Activated CD4-positive, alpha-beta T cell treated with anti-CD3 and anti-CD28 coated beads, Interleukin-2, amount 10 ng/mL, durations not matched to agents 24 days and 14 days (primary cell): ENCODE measurements at regions of chr17 and their contacts with region 1.

Region 1: GRCh38 chr17:51153210-51154072 is at the start of gene NME1:
- DNase-seq: peak; percentile 100
- H3K4me3 Mint-ChIP-seq: no peak within 1 kb of the TSS
- H3K27ac Mint-ChIP-seq: no peak within 1 kb of the TSS
- H3K4me1 Mint-ChIP-seq: peaks cover 23% of the 10 kb centered on the region
- H3K27me3 Mint-ChIP-seq: no peaks in the 10 kb centered on the region
- total RNA-seq, gene NME1: 447 and 455 TPM in 2 replicates

Region 2: DNA sequence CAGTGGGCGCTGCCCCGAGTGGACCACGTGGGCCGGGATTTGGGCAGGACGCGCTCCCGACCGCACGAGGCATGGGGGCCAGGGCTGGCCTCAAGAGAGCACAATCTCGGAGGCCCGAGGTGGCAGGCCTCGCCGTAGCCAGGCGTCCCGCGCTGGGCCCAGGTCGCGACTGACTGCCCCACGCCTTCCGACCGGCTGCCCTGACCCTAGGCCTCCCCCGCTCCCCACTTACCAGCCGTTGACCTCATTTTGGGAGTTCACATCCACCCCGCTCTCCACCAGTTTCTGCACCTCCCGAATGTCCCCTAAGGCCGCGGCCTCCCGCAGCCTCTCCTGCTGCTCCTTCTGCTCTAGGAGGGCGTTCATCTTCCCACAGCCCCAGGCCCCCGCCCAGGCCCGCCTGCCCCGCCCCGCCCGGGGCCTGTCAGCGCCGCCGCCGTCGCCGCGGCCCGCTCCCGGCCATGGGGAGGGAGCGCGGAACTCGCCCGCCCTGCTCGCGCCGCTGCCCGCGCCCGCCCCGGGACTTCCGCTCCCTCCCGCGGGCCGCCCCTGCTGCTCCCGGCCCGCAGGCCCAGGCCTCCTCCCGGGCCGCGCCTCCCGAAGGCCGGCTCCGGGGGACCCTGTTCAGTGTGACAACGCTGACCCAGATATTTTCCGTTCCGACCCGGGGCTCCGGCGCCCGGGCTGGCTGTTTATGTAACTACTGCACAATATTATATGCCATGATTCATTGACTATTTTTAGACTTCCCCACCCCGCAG is 446.0 kb before region 1 on chr17 and contains the start of gene ANKRD40:
- intact Hi-C with region 1: loop called (anchors 5 kb)
- DNase-seq: peak; percentile 98
- H3K4me3 Mint-ChIP-seq: peak within 1 kb of the TSS; percentile 86
- H3K27ac Mint-ChIP-seq: peak within 1 kb of the TSS; percentile 98
- H3K4me1 Mint-ChIP-seq: peaks cover 33% of the 10 kb centered on the region
- H3K27me3 Mint-ChIP-seq: peaks cover 2% of the 10 kb centered on the region
- total RNA-seq, gene ANKRD40: 47.7 and 49.8 TPM in 2 replicates

Region 3: DNA sequence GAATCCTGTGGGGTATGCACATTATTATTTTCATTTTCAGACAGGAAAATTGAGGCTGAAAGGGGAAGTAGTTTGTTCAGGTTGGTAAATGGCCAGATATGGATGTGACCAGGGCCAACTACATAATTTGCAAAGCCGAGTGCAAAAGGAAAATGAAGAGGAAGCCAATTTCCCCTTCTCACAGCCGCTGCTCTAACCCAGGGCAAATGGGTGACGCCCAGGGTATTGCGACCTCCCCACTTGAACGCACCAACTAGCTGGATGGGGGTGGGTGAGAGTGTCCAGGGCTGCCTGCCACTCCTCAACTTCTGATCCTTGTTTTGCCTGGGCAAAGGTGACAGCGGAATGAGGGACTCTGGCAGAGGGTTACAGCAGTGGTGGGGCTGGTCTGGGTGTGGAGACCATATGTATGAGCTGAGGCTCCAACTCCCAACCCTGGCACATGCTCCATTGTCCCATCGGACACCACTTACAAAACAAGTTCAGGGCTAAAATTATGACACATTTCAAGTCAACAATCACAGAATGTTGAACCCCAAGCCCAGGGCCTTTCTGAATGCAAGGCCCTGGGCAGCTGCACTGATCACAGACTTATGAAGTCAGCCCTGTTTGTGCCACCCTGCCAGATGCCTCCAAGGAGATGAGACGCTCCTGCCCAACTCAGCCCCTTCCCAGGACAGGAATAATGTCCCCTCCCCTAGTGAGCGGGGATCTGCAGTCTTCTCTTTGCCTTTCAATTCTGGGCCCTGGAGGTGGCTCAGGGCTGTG is 387.8 kb before region 1 on chr17:
- intact Hi-C with region 1: no loop called
- DNase-seq: no peak
- H3K4me3 Mint-ChIP-seq: no peak overlapping the region
- H3K27ac Mint-ChIP-seq: no peak overlapping the region
- H3K4me1 Mint-ChIP-seq: no peaks in the 10 kb centered on the region
- H3K27me3 Mint-ChIP-seq: peaks cover 29% of the 10 kb centered on the region

Region 4: GRCh38 chr17:51000835-51001638 is 152.4 kb before region 1 on chr17:
- intact Hi-C with region 1: loop called (anchors 1 kb)
- DNase-seq: peak; percentile 83
- H3K4me3 Mint-ChIP-seq: no peak overlapping the region
- H3K27ac Mint-ChIP-seq: peak overlapping the region; percentile 4
- H3K4me1 Mint-ChIP-seq: peaks cover 3% of the 10 kb centered on the region
- H3K27me3 Mint-ChIP-seq: no peaks in the 10 kb centered on the region

Region 5: DNA sequence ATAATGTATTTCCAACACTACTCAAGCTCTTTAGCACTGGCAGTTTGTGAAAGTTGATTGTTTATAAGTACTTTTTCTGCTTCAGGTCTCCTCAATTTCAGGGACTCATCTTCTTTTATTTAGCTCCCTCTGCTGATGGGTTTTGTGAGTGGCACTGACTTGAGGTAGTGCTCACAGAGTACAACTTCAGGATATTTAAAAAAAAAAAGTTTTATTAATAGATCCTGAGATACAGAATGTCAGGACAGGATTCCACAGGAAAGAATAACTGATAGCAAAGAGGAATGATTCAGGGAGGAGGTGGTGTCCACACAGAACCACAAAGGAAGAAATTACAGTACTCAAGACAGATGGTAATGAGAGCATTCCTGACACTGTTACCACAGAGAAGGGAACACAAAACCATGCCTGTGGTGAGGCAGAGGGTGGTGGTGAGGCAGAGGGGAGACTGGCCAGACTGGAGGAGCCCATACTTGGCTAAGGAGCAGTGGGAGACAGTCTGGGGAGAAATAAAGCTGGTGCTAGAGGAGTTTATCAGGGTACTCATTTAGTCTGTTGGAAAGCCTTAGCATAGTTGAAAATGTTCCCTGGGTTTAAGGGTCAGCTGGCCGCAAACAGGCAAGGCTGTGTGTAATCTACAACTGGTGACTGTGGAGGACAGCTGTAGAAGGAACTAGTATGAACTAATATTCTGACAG is 96.5 kb before region 1 on chr17:
- intact Hi-C with region 1: loop called (anchors 1 kb)
- DNase-seq: peak; percentile 81
- H3K4me3 Mint-ChIP-seq: no peak overlapping the region
- H3K27ac Mint-ChIP-seq: no peak overlapping the region
- H3K4me1 Mint-ChIP-seq: peaks cover 3% of the 10 kb centered on the region
- H3K27me3 Mint-ChIP-seq: no peaks in the 10 kb centered on the region

Region 6: GRCh38 chr17:51097708-51098446 is 55.6 kb before region 1 on chr17:
- intact Hi-C with region 1: no loop called
- DNase-seq: no peak
- H3K4me3 Mint-ChIP-seq: no peak overlapping the region
- H3K27ac Mint-ChIP-seq: no peak overlapping the region
- H3K4me1 Mint-ChIP-seq: peaks cover 26% of the 10 kb centered on the region
- H3K27me3 Mint-ChIP-seq: no peaks in the 10 kb centered on the region

Region 7: GRCh38 chr17:51120739-51121617 is 32.5 kb before region 1 on chr17 and contains the start of gene SPAG9:
- intact Hi-C with region 1: loop called (anchors 1 kb)
- DNase-seq: peak; percentile 98
- H3K4me3 Mint-ChIP-seq: peak within 1 kb of the TSS; percentile 91
- H3K27ac Mint-ChIP-seq: peak within 1 kb of the TSS; percentile 98
- H3K4me1 Mint-ChIP-seq: peaks cover 43% of the 10 kb centered on the region
- H3K27me3 Mint-ChIP-seq: peaks cover 1% of the 10 kb centered on the region
- total RNA-seq, gene SPAG9: 47.5 and 47.7 TPM in 2 replicates

Region 8: DNA sequence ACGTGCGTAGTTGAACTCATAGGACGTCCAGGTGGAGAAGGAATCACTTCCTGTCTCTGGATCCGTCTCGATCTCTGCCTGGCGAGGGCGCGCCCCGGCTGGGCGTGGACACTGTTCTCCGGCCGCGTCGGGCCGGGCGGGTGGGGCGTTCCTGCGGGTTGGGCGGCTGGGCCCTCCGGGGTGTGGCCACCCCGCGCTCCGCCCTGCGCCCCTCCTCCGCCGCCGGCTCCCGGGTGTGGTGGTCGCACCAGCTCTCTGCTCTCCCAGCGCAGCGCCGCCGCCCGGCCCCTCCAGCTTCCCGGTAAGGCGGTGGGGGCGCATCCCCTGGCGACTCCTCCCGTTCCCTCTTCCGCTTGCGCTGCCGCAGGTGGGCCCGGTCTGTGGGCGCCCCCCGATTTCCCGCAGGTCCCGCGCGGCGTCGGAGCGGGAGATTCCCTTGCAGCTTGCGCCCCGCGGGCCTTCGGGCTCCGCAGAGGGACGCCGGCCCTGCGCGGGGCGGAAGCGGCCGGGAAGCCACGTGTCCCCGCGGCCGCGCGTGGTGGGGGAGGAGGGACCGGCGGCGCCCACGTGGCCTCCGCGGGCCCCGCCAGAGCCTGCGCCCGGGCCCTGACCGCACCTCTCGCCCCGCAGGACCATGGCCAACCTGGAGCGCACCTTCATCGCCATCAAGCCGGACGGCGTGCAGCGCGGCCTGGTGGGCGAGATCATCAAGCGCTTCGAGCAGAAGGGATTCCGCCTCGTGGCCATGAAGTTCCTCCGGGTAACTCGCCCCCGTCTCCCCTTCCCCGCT is 13.0 kb after region 1 on chr17 and contains the start of gene NME2:
- intact Hi-C with region 1: loop called (anchors 1 kb)
- DNase-seq: peak; percentile 94
- H3K4me3 Mint-ChIP-seq: peak within 1 kb of the TSS; percentile 88
- H3K27ac Mint-ChIP-seq: peak within 1 kb of the TSS; percentile 97
- H3K4me1 Mint-ChIP-seq: peaks cover 30% of the 10 kb centered on the region
- H3K27me3 Mint-ChIP-seq: no peaks in the 10 kb centered on the region
- total RNA-seq, gene NME2: 752 and 795 TPM in 2 replicates

Region 9: DNA sequence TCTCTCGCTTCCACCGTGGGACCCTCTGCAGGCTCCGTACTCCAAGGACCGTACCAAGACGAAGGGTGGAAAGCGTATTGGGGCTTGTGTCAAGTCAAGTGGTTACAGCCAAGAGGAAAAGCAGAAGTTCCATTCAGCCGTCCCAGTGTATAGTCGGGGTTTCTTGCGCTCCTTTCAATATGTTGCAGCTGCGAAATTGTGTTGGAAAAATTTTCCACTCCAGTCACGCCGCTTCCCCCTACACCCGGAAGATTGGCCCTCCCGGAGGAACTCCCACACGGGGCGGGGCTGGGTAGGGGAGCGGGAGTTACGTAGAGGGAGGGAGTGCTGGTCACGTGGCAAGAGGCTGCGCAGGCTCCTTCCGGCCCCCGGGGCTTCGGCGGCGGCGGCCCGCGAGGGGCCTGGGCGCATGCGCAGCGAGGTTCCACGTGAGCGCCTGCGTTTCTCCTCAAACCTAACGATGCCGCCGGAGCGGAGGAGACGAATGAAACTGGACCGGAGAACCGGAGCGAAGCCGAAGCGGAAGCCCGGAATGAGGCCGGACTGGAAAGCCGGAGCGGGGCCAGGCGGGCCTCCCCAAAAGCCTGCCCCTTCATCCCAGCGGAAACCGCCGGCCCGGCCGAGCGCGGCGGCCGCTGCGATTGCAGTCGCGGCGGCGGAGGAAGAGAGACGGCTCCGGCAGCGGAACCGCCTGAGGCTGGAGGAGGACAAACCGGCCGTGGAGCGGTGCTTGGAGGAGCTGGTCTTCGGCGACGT is 106.9 kb after region 1 on chr17 and contains the start of gene UTP18:
- intact Hi-C with region 1: loop called (anchors 1 kb)
- DNase-seq: peak; percentile 98
- H3K4me3 Mint-ChIP-seq: peak within 1 kb of the TSS; percentile 84
- H3K27ac Mint-ChIP-seq: peak within 1 kb of the TSS; percentile 97
- H3K4me1 Mint-ChIP-seq: peaks cover 48% of the 10 kb centered on the region
- H3K27me3 Mint-ChIP-seq: no peaks in the 10 kb centered on the region
- total RNA-seq, gene UTP18: 79.9 and 84.5 TPM in 2 replicates